Heart right ventricle (tissue), 16 donors: ENCODE measurements at regions of chr19 and their contacts with region 1.

Region 1: DNA sequence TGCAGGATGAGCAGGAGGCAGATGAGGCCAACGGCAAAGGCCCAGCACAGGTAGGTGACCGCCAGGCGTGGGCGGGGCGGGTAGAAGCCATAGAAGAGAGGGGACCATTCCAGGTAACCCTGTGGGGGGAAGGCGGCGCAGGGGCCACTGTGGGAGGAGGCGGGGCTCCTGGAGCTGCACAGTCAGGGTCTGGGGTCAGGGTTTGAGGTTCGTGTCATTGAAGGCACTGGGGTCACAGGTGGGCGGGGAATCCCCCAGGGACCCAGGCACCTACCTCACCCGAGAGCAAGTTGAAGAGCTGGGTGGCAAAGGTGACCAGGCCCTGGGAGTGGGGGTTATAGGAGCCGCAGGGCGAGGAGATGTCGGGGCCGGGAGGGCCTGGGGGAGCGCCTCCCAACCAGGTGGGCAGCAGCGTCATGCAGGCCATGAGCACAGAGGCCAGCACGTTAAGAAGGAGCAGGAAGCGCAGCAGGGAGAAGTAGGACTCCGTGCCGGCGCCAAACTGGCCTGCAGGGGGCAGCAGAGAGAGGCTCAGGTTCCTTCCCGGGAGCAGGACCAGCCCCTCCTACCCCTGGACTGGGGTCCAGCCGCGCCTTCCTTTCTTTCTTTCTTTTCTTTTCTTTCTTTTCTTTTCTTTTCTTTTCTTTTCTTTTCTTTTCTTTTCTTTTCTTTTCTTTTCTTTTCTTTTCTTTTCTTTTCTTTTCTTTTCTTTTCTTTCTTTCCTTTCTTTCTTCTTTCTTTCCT is 4.6 kb downstream of the TMC4 start:
- DNase-seq: peak; percentile 92 to 96
- ATAC-seq: peak; percentile 85 to 92 (median 89)
- H3K4me3 ChIP-seq: no peak overlapping the region
- H3K27ac ChIP-seq: no peak overlapping the region
- H3K4me1 ChIP-seq: peaks cover 2 to 25% (median 11%) of the 10 kb centered on the region in 9 donors
- H3K27me3 ChIP-seq: peaks cover 0 to 43% (median 25%) of the 10 kb centered on the region in 7 donors
- CTCF ChIP-seq: peak; percentile 79 to 93 (median 84)

Region 2: DNA sequence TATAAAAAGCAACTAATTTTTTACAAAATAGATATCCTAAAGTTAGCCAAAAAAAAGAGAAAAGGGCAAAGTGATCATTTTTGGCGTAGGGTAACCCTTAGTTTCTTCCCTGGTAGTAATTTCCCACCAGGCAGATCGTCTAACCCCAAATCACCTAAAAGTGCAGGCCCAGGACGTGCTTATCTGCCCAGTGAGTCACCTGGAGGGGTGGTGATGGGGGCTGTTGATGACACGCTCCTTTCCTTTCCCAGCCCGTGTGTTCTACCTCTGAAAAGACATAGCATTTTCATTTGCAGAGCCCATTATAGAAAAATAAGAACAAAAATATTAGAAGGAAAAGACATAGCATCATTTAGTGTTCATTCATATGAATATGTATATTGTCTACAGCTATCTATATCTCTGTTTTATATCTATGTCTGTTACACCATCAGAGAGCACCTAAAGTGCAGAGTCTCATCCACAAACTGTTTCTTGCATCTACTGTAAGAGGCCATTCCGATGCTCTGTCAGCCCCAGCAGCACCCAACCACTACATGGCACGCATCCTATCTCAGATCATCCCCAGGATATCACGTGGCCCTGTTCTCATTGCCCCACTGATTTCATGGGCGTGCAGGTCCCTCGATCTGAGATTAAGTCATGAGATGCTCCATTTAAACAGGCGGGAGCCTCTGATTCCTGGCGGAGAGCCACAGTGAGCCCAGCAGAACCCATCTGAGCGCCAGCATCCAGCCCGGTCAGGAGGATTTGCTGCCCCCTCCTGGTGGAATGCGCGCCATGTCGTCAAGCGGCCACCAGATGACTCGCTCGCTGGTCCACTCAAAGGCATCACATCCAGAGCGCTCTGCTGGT is 63.0 kb after region 1 on chr19:
- intact Hi-C with region 1: loop called (anchors 1 to 5 kb)
- DNase-seq: peak; percentile 87
- ATAC-seq: peak; percentile 87 to 98 (median 94)
- H3K4me3 ChIP-seq: no peak overlapping the region
- H3K27ac ChIP-seq: no peak overlapping the region
- H3K4me1 ChIP-seq: peaks cover 0 to 5% (median 0%) of the 10 kb centered on the region in 9 donors
- H3K27me3 ChIP-seq: peaks cover 3 to 68% (median 27%) of the 10 kb centered on the region in 7 donors
- CTCF ChIP-seq: peak; percentile 83 to 99 (median 92)